ENCODE measurements at regions of chr5 and their contacts with region 1.

Region 1: GRCh38 chr5:173238312-173239232 is 3.6 kb upstream of the NKX2-5 start:
- DNase-seq: peak; percentile 59
- H3K4me3 Mint-ChIP-seq: peak overlapping the region; percentile 52
- H3K27ac Mint-ChIP-seq: peak overlapping the region; percentile 70
- H3K4me1 Mint-ChIP-seq: peaks cover 11% of the 10 kb centered on the region
- H3K27me3 Mint-ChIP-seq: peaks cover 90% of the 10 kb centered on the region

Region 2: GRCh38 chr5:171314728-171315385 is 1923.7 kb before region 1 on chr5:
- intact Hi-C with region 1: loop called (anchors 5 kb)
- DNase-seq: no peak
- H3K4me3 Mint-ChIP-seq: no peak overlapping the region
- H3K27ac Mint-ChIP-seq: no peak overlapping the region
- H3K4me1 Mint-ChIP-seq: peaks cover 8% of the 10 kb centered on the region
- H3K27me3 Mint-ChIP-seq: peaks cover 72% of the 10 kb centered on the region

Region 3: DNA sequence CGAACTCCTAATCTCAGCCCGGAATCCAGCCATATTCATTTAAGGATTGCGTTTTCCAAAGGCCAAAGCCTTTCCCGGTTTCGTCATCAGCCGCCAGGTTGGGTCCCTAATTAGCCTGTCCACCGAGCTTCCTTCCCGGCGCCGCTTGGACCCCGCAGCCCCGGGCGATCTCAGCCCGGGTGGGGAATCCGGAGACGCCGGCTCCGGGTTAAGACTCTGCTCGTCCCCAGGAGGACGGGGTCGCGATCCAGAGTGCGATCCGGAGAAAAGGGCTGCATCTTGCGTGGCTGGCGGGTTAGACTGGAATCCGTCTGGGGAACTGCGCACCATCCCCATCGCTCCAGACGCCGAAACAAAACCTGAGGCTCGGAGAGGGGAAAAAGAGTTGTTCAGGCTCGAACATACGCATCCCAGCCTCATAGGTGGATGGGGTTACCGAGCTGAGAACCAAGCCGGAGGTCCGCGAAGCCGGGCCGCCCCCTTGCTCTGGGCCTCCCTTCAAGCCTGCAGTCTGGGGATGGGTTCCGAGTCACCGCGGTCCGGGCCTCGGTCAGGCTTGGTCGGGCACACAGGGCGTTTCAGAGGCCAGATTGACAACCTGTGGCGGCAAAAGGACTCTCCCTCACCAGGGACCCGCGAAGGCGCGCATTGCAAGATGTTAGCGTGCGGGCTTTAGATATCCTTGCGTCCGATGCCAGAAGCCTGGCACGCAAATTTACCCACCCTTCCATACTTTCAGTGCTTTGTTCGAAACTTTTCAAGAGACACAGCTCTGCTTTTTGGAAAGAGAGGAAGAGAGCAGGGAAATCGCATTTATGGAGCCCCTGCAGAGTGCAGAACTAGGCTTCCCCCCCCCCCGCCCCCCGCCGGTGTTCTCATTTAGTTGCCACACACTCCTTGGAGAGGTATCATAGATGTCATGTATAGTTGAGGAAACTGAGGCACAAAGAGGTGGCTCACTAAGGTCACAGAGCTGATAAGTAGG is 1493.8 kb after region 1 on chr5:
- intact Hi-C with region 1: loop called (anchors 5 kb)
- DNase-seq: no peak
- H3K4me3 Mint-ChIP-seq: no peak overlapping the region
- H3K27ac Mint-ChIP-seq: no peak overlapping the region
- H3K4me1 Mint-ChIP-seq: no peaks in the 10 kb centered on the region
- H3K27me3 Mint-ChIP-seq: peaks cover 91% of the 10 kb centered on the region

Measured in activated CD4-positive, alpha-beta T cell treated with anti-CD3 and anti-CD28 coated beads, Interleukin-2, amount 10 ng/mL, durations not matched to agents 24 days and 14 days (primary cell).